CD14-positive monocyte (primary cell): ENCODE measurements at regions of chr7 and their contacts with region 1.

Region 1: GRCh38 chr7:23205909-23206767 is 24.3 kb downstream of the NUP42 start:
- DNase-seq: peak in 1 of 3 donors; percentile 27
- H3K4me3 ChIP-seq: peak overlapping the region; percentile 36 to 58 (median 38)
- H3K4me3 Mint-ChIP-seq: peak overlapping the region; percentile 73 to 87
- H3K27ac ChIP-seq: peak overlapping the region; percentile 73 to 93
- H3K27ac Mint-ChIP-seq: peak overlapping the region; percentile 89 to 98 (median 93)
- H3K4me1 ChIP-seq: peaks cover 54 to 57% of the 10 kb centered on the region in 2 donors
- H3K4me1 Mint-ChIP-seq: peaks cover 53% of the 10 kb centered on the region
- H3K27me3 ChIP-seq: no peaks in the 10 kb centered on the region
- H3K27me3 Mint-ChIP-seq: peaks cover 8 to 21% (median 8%) of the 10 kb centered on the region in 3 donors
- CTCF ChIP-seq: no peak

Region 2: GRCh38 chr7:23242321-23242720 is 36.2 kb after region 1 on chr7:
- intact Hi-C with region 1: loop called (anchors 2 to 5 kb)
- DNase-seq: peak; percentile 72 to 85 (median 79)
- H3K4me3 ChIP-seq: no peak overlapping the region
- H3K4me3 Mint-ChIP-seq: no peak overlapping the region
- H3K27ac ChIP-seq: no peak overlapping the region
- H3K27ac Mint-ChIP-seq: peak overlapping the region in 4 of 7 donors; percentile 30 to 60 (median 43)
- H3K4me1 ChIP-seq: peaks cover 18 to 19% of the 10 kb centered on the region in 2 donors
- H3K4me1 Mint-ChIP-seq: peaks cover 23% of the 10 kb centered on the region
- H3K27me3 ChIP-seq: no peaks in the 10 kb centered on the region
- H3K27me3 Mint-ChIP-seq: peaks cover 2 to 6% (median 2%) of the 10 kb centered on the region in 3 donors
- CTCF ChIP-seq: no peak

Region 3: DNA sequence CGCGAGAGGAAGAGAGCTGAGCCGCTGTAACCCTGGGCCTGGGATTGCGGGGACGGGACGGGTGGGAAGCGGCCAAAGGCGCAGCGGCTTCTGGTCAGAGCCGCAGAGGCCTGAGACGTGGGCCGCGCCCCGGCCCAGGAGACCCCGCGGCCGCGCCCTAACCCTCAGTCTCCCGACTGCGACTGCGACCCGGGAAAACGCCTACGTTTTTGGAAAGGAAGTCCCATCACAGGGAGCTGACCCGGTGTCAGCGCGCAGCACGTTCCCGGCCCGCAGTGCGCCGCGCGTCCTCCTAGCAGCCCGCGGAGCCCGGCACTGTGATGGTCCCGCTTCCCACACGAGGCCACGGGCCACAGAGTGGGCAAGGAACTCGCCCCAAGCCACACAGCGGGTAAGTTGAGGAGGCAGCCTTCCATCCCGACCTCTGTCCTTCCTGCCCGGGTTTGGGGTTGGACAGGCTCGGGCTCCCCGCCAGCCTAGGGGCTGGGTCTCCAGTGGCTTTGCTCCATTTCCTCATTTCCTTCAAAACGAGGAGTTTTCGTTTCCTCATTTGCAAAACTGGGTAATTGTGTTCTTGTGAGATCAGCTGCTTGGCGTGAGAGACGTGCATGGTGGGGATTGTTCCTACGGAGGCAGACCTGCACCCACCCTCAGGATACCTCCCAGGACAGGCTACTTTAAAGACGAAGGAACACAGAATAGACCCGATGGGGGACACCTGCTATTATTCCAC is 41.6 kb after region 1 on chr7:
- intact Hi-C with region 1: loop called (anchors 2 to 5 kb)
- DNase-seq: peak; percentile 77 to 87 (median 84)
- H3K4me3 ChIP-seq: peak overlapping the region; percentile 29 to 87 (median 57)
- H3K4me3 Mint-ChIP-seq: peak overlapping the region; percentile 82 to 89
- H3K27ac ChIP-seq: peak overlapping the region; percentile 68 to 95
- H3K27ac Mint-ChIP-seq: peak overlapping the region; percentile 82 to 95 (median 90)
- H3K4me1 ChIP-seq: peaks cover 24 to 28% of the 10 kb centered on the region in 2 donors
- H3K4me1 Mint-ChIP-seq: peaks cover 27% of the 10 kb centered on the region
- H3K27me3 ChIP-seq: no peaks in the 10 kb centered on the region
- H3K27me3 Mint-ChIP-seq: peaks cover 2 to 11% (median 8%) of the 10 kb centered on the region in 3 donors
- CTCF ChIP-seq: no peak